ENCODE measurements at regions of chr17 and their contacts with region 1.

Region 1: GRCh38 chr17:48678141-48678971 is 44.0 kb downstream of the PRAC1 start:
- DNase-seq: peak; percentile 76
- ATAC-seq: peak; percentile 96
- H3K4me3 Mint-ChIP-seq: no peak overlapping the region
- H3K27ac Mint-ChIP-seq: no peak overlapping the region
- H3K4me1 Mint-ChIP-seq: peaks cover 2% of the 10 kb centered on the region
- H3K27me3 Mint-ChIP-seq: peaks cover 54% of the 10 kb centered on the region

Region 2: DNA sequence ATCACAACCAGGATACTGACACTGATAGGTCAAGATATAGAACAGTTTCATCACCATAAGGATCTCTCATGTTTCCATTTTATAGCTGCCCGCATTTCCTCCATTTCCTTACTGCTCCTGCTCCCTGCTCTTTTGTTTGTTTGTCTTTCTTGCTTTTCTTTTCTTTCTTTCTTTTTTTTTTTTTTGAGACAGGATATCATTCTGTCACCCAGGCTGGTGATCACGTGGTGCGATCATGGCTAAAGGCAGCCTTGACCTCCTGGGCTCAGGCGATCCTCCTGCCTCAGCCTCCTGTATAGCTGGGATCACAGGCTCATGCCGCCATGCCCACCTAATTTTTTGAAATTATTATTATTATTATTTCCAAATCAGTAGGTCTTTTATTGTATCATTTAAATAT is 12.3 kb after region 1 on chr17:
- CTCF ChIA-PET with region 1: interaction called, 33 read pairs
- POLR2A ChIA-PET with region 1: no interaction called
- DNase-seq: no peak
- ATAC-seq: no peak
- H3K4me3 Mint-ChIP-seq: no peak overlapping the region
- H3K27ac Mint-ChIP-seq: no peak overlapping the region
- H3K4me1 Mint-ChIP-seq: no peaks in the 10 kb centered on the region
- H3K27me3 Mint-ChIP-seq: peaks cover 15% of the 10 kb centered on the region

Region 3: GRCh38 chr17:48724251-48725003 is 46.1 kb after region 1 on chr17:
- CTCF ChIA-PET with region 1: interaction called, 33 read pairs
- POLR2A ChIA-PET with region 1: no interaction called
- DNase-seq: peak; percentile 88
- ATAC-seq: peak; percentile 80
- H3K4me3 Mint-ChIP-seq: peak overlapping the region; percentile 45
- H3K27ac Mint-ChIP-seq: no peak overlapping the region
- H3K4me1 Mint-ChIP-seq: peaks cover 42% of the 10 kb centered on the region
- H3K27me3 Mint-ChIP-seq: peaks cover 94% of the 10 kb centered on the region

Region 4: GRCh38 chr17:48767263-48767774 is 89.0 kb after region 1 on chr17:
- CTCF ChIA-PET with region 1: interaction called, 14 read pairs
- POLR2A ChIA-PET with region 1: no interaction called
- DNase-seq: no peak
- ATAC-seq: no peak
- H3K4me3 Mint-ChIP-seq: no peak overlapping the region
- H3K27ac Mint-ChIP-seq: no peak overlapping the region
- H3K4me1 Mint-ChIP-seq: peaks cover 5% of the 10 kb centered on the region
- H3K27me3 Mint-ChIP-seq: peaks cover 43% of the 10 kb centered on the region

Region 5: DNA sequence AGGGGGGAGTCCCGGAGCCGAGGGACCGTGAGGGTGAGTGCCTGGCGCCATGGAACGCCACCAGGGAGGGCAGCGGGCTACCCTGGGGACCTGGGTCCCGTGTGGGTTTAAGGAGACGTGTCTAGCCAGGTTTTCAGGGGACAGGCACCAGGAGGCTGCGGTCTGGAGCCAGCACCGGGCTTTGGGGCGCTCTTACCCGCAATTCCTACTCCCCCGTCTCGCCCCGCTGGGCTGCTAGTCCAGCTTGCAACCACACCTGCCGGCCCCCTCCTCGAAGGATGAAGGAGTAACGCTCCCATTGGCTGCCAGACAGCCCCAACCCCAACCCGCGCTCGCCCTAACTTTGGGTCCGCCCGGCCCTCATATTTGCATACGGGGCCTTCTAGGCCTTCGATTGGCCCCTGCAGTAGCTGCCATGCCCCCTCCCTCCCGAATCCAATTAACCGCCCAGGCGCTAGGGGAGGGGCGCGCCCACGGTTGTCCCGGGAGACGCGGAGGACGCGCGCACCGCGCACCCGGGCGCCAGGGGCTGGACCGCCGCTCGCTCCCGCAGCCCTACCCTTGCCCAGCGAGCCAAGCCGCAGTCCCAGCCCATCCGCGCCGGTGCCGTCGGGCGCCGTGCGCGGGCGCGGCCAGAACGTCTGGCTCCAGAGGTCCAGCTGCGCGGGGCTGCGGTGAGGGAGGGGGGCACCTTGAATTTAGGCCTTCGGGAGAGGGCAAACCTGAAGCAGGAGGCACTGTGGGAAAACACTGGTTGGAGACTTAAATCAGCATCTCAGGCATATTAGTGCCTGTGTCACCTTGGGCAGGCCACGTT is 138.6 kb after region 1 on chr17 and contains the start of gene TTLL6:
- CTCF ChIA-PET with region 1: interaction called, 12 read pairs
- POLR2A ChIA-PET with region 1: no interaction called
- DNase-seq: peak; percentile 88
- ATAC-seq: peak; percentile 98
- H3K4me3 Mint-ChIP-seq: peak within 1 kb of the TSS; percentile 75
- H3K27ac Mint-ChIP-seq: peak within 1 kb of the TSS; percentile 52
- H3K4me1 Mint-ChIP-seq: peaks cover 19% of the 10 kb centered on the region
- H3K27me3 Mint-ChIP-seq: peaks cover 52% of the 10 kb centered on the region
- total RNA-seq, gene TTLL6: not detected